Left colon (tissue), 2 donors: ENCODE measurements at regions of chr18 and their contacts with region 1.

Region 1: GRCh38 chr18:44709307-44710126 is 28.8 kb downstream of the SETBP1 start:
- DNase-seq: no peak
- ATAC-seq: no peak

Region 2: GRCh38 chr18:44789710-44790109 is 80.2 kb after region 1 on chr18:
- intact Hi-C with region 1: no loop called
- DNase-seq: no peak
- ATAC-seq: peak; percentile 15

Region 3: DNA sequence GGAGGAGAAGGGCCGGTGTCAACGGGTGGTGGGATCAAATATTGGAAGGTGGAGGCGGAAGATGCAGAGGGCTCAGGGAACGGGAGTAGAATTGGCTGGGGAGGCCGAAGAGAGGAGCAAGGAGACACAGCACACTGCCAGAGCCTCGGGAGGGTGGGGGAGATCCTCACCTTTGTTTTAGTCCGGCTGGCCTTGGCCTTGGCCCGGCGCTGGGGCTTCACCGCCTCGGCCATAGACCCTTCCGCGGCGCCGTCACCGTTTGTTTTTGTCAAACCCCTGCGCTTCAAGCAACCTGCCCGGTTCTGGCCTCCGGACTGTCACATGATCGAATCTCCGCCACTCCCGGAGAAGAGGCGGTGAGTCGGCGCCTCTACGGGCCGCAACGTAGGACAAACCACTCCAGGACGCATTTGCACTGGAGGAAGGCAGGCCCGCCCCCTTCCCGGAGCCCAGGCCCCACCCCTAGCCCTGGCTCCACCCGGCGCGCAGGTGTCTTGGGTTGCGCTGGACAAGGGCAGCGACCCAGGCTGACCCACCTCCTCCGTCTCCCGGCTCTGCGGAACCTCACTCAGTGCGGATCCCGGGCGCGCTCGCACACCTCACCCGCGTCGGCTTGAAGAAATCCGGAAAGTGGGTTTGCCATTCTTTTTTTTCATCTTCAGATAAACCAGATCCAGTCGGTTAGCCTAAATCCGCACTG is 1257.6 kb after region 1 on chr18 and contains the start of gene EPG5:
- intact Hi-C with region 1: loop called in 1 of 2 experiments (anchors 10 kb)
- DNase-seq: peak; percentile 97 to 98
- ATAC-seq: peak; percentile 99
- total RNA-seq, gene EPG5: 18.0 to 21.5 TPM